Calu3 (cell line): ENCODE measurements at regions of chr14 and their contacts with region 1.

Region 1: DNA sequence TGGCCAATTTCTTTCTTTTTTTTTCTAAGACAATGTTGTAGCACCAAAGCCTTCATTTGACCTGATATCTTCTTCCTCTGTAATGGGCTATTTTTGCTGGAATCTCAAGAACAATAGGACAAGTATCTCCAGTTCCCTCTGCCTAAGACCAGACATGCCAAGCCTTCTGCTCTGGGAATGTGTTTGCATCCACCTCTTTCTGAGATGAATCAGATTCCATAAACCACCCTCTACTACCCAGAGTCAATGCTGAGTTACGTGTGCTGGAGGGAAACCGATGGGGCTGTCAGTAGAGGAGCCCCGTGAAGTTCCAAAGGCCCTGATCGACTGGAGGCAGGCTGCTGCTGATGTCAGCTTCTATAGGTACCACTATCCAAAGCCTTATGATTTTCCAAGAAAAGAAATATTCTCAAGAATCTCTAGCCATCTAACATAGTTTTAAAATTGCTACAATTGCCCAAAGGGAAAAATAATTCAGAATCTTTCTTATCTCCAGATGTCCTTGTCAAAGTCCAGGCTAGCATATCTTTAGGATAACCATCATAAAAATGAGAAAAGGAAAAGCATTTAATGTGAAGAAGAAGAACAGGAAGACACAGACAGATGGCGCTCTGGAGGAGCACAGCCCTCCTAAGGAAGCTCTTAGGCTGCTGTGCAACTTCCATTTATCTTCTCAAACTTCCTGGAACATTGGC is 101.9 kb downstream of the SLC8A3 start:
- DNase-seq: peak; percentile 41
- H3K4me3 Mint-ChIP-seq: no peak overlapping the region
- H3K27ac Mint-ChIP-seq: no peak overlapping the region
- H3K4me1 Mint-ChIP-seq: no peaks in the 10 kb centered on the region
- H3K27me3 Mint-ChIP-seq: peaks cover 37% of the 10 kb centered on the region
- CTCF ChIP-seq: no peak

Region 2: DNA sequence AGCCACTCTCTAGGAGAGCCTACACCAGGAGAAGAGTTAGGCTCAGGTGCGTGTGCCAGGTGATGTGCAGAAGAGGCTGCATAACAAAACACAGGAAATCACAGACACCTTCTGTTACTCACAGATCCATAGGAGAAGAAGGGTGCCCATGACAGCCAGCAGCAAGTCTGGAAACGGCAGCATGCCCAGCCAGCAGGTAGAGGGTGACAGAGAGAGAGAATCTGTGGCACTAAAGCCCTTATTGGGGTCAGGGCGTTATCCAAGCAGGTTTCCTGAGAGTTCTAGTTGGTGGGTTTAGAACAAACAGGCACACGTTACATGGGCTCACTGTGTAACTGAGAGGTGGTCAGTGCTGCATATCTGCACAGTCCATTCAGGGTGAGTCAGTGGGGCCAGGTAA is 116.9 kb after region 1 on chr14:
- CTCF ChIA-PET with region 1: no interaction called
- intact Hi-C with region 1: no loop called
- DNase-seq: no peak
- H3K4me3 Mint-ChIP-seq: no peak overlapping the region
- H3K27ac Mint-ChIP-seq: no peak overlapping the region
- H3K4me1 Mint-ChIP-seq: no peaks in the 10 kb centered on the region
- H3K27me3 Mint-ChIP-seq: peaks cover 75% of the 10 kb centered on the region
- CTCF ChIP-seq: no peak

Region 3: DNA sequence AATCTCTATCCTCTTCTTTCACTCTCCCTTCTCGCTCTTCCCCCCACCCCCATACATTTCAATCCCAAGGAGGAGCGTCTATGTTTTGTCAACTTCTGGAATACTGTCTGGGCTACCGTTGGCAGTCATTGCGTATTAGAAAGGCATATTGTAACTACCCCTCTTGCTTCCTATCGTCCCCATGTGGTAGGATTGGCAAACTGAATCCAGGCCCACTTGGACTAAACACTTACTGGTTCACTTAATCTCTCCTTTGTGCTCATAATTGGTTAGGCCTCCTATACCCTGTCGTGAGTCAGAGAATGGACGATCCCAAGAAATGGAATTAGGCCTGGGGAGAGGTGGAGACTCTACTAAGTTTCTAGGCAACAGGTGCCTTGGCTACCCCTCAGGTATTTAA is 170.7 kb after region 1 on chr14:
- CTCF ChIA-PET with region 1: no interaction called
- intact Hi-C with region 1: loop called (anchors 2 kb)
- DNase-seq: peak; percentile 68
- H3K4me3 Mint-ChIP-seq: no peak overlapping the region
- H3K27ac Mint-ChIP-seq: no peak overlapping the region
- H3K4me1 Mint-ChIP-seq: no peaks in the 10 kb centered on the region
- H3K27me3 Mint-ChIP-seq: peaks cover 57% of the 10 kb centered on the region
- CTCF ChIP-seq: peak; percentile 15

Region 4: DNA sequence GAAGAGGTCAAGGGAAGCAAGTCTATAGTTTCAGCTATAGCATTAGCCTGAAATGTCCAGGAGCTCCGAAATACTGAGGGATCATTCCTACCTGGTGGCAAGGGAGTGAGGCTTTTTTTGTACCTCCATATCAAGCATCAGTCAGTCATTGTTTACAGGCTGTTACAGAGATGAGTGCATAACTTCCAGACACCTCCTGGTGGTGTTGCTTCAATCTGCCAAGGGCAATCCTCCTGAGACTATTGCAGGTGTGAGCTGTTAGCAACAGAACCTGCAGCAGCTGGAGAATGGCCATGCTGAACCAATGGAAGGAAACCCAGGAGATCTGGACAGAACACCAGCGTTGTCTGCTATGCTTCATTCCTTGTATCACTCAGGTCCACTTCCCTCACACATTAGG is 181.9 kb after region 1 on chr14:
- CTCF ChIA-PET with region 1: no interaction called
- intact Hi-C with region 1: no loop called
- DNase-seq: no peak
- H3K4me3 Mint-ChIP-seq: no peak overlapping the region
- H3K27ac Mint-ChIP-seq: no peak overlapping the region
- H3K4me1 Mint-ChIP-seq: no peaks in the 10 kb centered on the region
- H3K27me3 Mint-ChIP-seq: peaks cover 36% of the 10 kb centered on the region
- CTCF ChIP-seq: no peak

Region 5: DNA sequence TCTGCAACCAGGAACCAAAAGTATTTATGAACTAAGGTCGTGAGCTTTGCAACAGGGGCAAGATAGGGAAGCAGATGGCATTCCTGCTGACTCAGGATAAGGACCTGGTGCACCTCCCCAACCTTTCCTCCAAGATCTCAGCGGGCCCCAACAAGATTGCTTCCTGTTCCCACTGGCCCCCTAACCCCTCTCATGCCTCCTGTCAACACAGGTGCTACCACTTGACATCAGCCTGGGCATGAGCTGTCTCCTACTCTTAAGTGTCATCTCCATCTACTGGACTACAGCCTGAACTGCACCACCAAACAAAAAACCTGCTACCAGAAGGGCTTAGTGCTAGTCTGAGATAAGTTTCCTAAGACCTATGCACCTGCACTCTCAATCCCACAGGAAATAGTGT is 481.0 kb after region 1 on chr14:
- CTCF ChIA-PET with region 1: interaction called, 3 read pairs
- intact Hi-C with region 1: loop called (anchors 5 kb)
- DNase-seq: peak; percentile 36
- H3K4me3 Mint-ChIP-seq: no peak overlapping the region
- H3K27ac Mint-ChIP-seq: no peak overlapping the region
- H3K4me1 Mint-ChIP-seq: no peaks in the 10 kb centered on the region
- H3K27me3 Mint-ChIP-seq: no peaks in the 10 kb centered on the region
- CTCF ChIP-seq: peak; percentile 58